ENCODE measurements at regions of chr12 and their contacts with region 1.

Region 1: GRCh38 chr12:113912760-113913329 is 53.3 kb downstream of the RBM19 start:
- DNase-seq: peak; percentile 79 to 83
- ATAC-seq: peak; percentile 79 to 93
- H3K4me3 ChIP-seq: no peak overlapping the region
- H3K27ac ChIP-seq: no peak overlapping the region
- H3K4me1 ChIP-seq: no peaks in the 10 kb centered on the region
- CTCF ChIP-seq: peak; percentile 94
- EP300 ChIP-seq: no peak
- POLR2A ChIP-seq: no peak
- RAD21 ChIP-seq: peak; percentile 90 to 93

Region 2: DNA sequence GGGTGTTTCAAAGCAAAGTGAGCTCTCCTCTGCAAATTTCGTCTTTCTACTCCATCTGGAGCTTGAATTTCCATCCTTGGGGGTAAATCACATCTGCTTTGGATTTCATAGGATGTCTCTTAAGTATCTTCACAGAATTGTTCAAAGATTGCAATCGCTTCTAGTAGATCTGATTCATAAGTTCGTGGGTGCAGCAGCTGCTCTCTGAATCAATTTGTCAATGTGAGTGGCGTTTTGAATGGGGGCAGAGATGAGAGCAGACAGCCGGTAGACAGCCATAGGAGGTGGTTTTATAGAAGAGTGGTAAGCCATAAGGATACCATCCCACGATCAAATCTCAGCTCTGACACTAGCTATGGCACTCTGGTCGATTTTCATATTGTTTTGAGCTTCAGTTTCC is 1267.3 kb before region 1 on chr12:
- CTCF ChIA-PET with region 1: no interaction called
- POLR2A ChIA-PET with region 1: no interaction called
- DNase-seq: no peak
- ATAC-seq: no peak
- H3K4me3 ChIP-seq: no peak overlapping the region
- H3K27ac ChIP-seq: no peak overlapping the region
- H3K4me1 ChIP-seq: peaks cover 6% of the 10 kb centered on the region; the same call in 1 of the 3 replicates
- CTCF ChIP-seq: no peak
- EP300 ChIP-seq: no peak
- POLR2A ChIP-seq: no peak
- RAD21 ChIP-seq: no peak

Region 3: GRCh38 chr12:113456761-113457160 is 456.1 kb before region 1 on chr12:
- CTCF ChIA-PET with region 1: interaction called, 60 read pairs
- POLR2A ChIA-PET with region 1: no interaction called
- DNase-seq: no peak
- ATAC-seq: no peak
- H3K4me3 ChIP-seq: no peak overlapping the region
- H3K27ac ChIP-seq: no peak overlapping the region
- H3K4me1 ChIP-seq: no peaks in the 10 kb centered on the region
- CTCF ChIP-seq: no peak
- EP300 ChIP-seq: no peak
- POLR2A ChIP-seq: no peak
- RAD21 ChIP-seq: no peak

Region 4: GRCh38 chr12:113867258-113867657 is 45.6 kb before region 1 on chr12:
- CTCF ChIA-PET with region 1: interaction called, 14 read pairs
- POLR2A ChIA-PET with region 1: no interaction called
- DNase-seq: peak; percentile 27 to 54
- ATAC-seq: peak; percentile 63 to 84; a peak in 4 of 6 replicates
- H3K4me3 ChIP-seq: no peak overlapping the region
- H3K27ac ChIP-seq: no peak overlapping the region
- H3K4me1 ChIP-seq: peaks cover 14% of the 10 kb centered on the region
- CTCF ChIP-seq: peak; percentile 44; the same call in 2 of the 3 replicates
- EP300 ChIP-seq: no peak
- POLR2A ChIP-seq: no peak
- RAD21 ChIP-seq: no peak

Measured in A549 (cell line).